ENCODE measurements at regions of chr14 and their contacts with region 1.

Region 1: DNA sequence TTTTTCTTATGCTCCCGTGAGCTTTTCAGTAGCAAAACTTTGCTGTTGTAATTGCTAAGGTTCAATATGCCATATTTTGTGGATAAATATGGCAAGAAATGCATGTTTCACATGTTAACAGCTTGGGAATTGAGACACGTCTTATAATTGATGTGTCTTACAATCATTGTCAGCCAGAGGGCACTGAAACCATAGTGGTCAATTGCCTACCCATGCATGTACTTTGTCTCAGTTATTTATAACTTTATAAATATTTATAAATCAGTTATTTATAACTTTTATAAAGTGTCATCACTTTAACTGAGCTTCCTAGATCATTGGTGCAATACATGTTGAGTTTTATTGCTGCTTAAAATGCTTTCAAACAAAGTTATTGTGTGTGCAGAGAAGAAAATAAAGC is 82.0 kb downstream of the CATSPERB start:
- DNase-seq: no peak
- ATAC-seq: peak; percentile 58; the same call in 2 of the 3 replicates
- H3K4me3 ChIP-seq: no peak overlapping the region
- H3K27ac ChIP-seq: no peak overlapping the region
- H3K4me1 ChIP-seq: no peaks in the 10 kb centered on the region
- H3K27me3 ChIP-seq: 0 out of 4 replicates have a peak, but pooled peaks cover 0 to 1% of the 10 kb centered on the region in 2 experiments
- CTCF ChIP-seq: peak; percentile 40 to 62 (median 44); a peak in 5 of 6 replicates
- EP300 ChIP-seq: no peak
- POLR2A ChIP-seq: no peak
- RAD21 ChIP-seq: peak; percentile 81

Region 2: GRCh38 chr14:91893007-91893406 is 243.1 kb after region 1 on chr14:
- CTCF ChIA-PET with region 1: interaction called, 3 read pairs
- POLR2A ChIA-PET with region 1: no interaction called
- RAD21 ChIA-PET with region 1: interaction called, 5 read pairs
- SMC1A ChIA-PET with region 1: interaction called, 3 read pairs
- in situ Hi-C with region 1: no loop called
- intact Hi-C with region 1: loop called (anchors 2 kb)
- DNase-seq: no peak
- ATAC-seq: peak; percentile 87
- H3K4me3 ChIP-seq: no peak overlapping the region
- H3K27ac ChIP-seq: no peak overlapping the region
- H3K4me1 ChIP-seq: no peaks in the 10 kb centered on the region
- H3K27me3 ChIP-seq: peaks cover 0 to 1% of the 10 kb centered on the region in 2 experiments; a peak in 1 of 4 replicates
- CTCF ChIP-seq: peak; percentile 52 to 67 (median 67)
- EP300 ChIP-seq: no peak
- POLR2A ChIP-seq: no peak
- RAD21 ChIP-seq: peak; percentile 41

Region 3: DNA sequence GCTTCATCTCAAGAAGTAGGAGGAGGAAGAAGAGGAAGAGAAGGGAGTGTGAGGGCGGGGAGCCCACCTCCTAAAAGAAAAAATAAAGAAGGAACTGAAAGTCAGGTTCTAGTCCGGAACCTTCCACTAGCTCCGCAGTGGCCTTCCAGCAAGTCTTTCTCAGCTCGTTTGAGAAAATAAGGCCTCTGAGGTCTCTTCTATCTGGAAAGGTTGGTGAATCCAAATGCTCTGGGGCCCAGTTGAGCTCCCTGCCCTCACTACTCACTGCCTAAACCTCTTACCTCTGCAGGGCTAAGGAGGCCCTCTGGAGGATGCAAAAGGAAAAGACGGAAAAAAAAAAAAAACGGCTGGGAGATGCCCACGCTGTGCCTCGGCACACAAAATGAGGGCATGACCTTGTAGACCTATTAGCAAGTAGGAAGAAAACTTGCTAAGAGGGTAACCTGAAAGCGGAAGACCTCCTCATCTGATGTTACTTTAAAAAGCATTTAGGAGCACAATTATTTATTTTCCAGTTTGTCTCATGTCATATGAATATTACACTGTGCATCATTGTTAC is 261.6 kb after region 1 on chr14:
- CTCF ChIA-PET with region 1: interaction called, 7 read pairs
- POLR2A ChIA-PET with region 1: no interaction called
- RAD21 ChIA-PET with region 1: interaction called, 5 read pairs
- SMC1A ChIA-PET with region 1: interaction called, 9 read pairs
- in situ Hi-C with region 1: no loop called
- intact Hi-C with region 1: loop called (anchors 1 kb)
- DNase-seq: peak; percentile 13
- ATAC-seq: peak; percentile 78
- H3K4me3 ChIP-seq: no peak overlapping the region
- H3K27ac ChIP-seq: no peak overlapping the region; the same call in 1 of the 2 replicates
- H3K4me1 ChIP-seq: peaks cover 8% of the 10 kb centered on the region
- H3K27me3 ChIP-seq: no peaks in the 10 kb centered on the region
- CTCF ChIP-seq: peak; percentile 36 to 52 (median 39); a peak in 5 of 6 replicates
- EP300 ChIP-seq: no peak
- POLR2A ChIP-seq: no peak
- RAD21 ChIP-seq: peak; percentile 68

Region 4: GRCh38 chr14:91996948-91997371 is 347.0 kb after region 1 on chr14:
- CTCF ChIA-PET with region 1: interaction called, 35 read pairs
- POLR2A ChIA-PET with region 1: no interaction called
- RAD21 ChIA-PET with region 1: interaction called, 12 read pairs
- SMC1A ChIA-PET with region 1: interaction called, 14 read pairs
- in situ Hi-C with region 1: loop called (anchors 10 kb)
- intact Hi-C with region 1: loop called (anchors 2 kb)
- DNase-seq: no peak
- ATAC-seq: peak; percentile 84
- H3K4me3 ChIP-seq: no peak overlapping the region
- H3K27ac ChIP-seq: no peak overlapping the region
- H3K4me1 ChIP-seq: no peaks in the 10 kb centered on the region
- H3K27me3 ChIP-seq: no peaks in the 10 kb centered on the region
- CTCF ChIP-seq: peak; percentile 57 to 60 (median 59)
- EP300 ChIP-seq: no peak
- POLR2A ChIP-seq: no peak
- RAD21 ChIP-seq: peak; percentile 61